ENCODE measurements at regions of chr10 and their contacts with region 1.

Region 1: GRCh38 chr10:67735430-67735829 is 39.4 kb upstream of the CTNNA3 start:
- DNase-seq: no peak
- ATAC-seq: no peak
- H3K4me3 ChIP-seq: no peak overlapping the region
- H3K27ac ChIP-seq: no peak overlapping the region
- H3K4me1 ChIP-seq: no peaks in the 10 kb centered on the region
- H3K27me3 ChIP-seq: no peaks in the 10 kb centered on the region

Region 2: GRCh38 chr10:66762218-66762729 is 973.2 kb before region 1 on chr10:
- intact Hi-C with region 1: loop called in 1 of 2 experiments (anchors 10 kb)
- DNase-seq: no peak
- ATAC-seq: no peak
- H3K4me3 ChIP-seq: no peak overlapping the region
- H3K27ac ChIP-seq: no peak overlapping the region
- H3K4me1 ChIP-seq: no peaks in the 10 kb centered on the region
- H3K27me3 ChIP-seq: no peaks in the 10 kb centered on the region

Region 3: GRCh38 chr10:67520924-67521520 is 214.4 kb before region 1 on chr10:
- intact Hi-C with region 1: no loop called
- DNase-seq: no peak
- ATAC-seq: peak; percentile 78
- H3K4me3 ChIP-seq: no peak overlapping the region
- H3K27ac ChIP-seq: no peak overlapping the region
- H3K4me1 ChIP-seq: no peaks in the 10 kb centered on the region
- H3K27me3 ChIP-seq: no peaks in the 10 kb centered on the region